ENCODE measurements at regions of chr7 and their contacts with region 1.

Region 1: GRCh38 chr7:104883718-104884452 is 130.1 kb upstream of the KMT2E start:
- DNase-seq: peak; percentile 87
- ATAC-seq: peak; percentile 89
- H3K4me3 Mint-ChIP-seq: no peak overlapping the region
- H3K27ac Mint-ChIP-seq: no peak overlapping the region
- H3K4me1 Mint-ChIP-seq: peaks cover 10% of the 10 kb centered on the region
- H3K27me3 Mint-ChIP-seq: no peaks in the 10 kb centered on the region

Region 2: DNA sequence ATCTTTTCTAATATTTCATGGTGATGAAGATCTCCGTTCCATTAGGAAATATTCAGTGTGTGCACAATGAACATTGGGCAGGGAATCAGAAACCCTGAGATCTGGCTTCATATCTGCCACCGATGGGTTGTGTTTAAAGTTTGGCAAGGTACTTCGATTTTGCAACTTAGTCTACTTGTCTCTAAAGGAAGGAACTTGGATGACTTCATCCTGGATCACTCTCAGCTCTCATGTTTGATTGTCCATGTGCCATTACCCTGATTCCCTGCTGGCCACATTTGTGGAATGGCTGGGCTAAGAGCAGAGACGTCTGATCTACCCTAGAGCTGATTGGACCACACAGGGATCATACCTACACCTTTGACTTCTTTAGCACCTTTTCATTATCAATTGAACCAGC is 46.9 kb before region 1 on chr7:
- CTCF ChIA-PET with region 1: no interaction called
- POLR2A ChIA-PET with region 1: no interaction called
- intact Hi-C with region 1: no loop called
- DNase-seq: no peak
- ATAC-seq: no peak
- H3K4me3 Mint-ChIP-seq: no peak overlapping the region
- H3K27ac Mint-ChIP-seq: no peak overlapping the region
- H3K4me1 Mint-ChIP-seq: no peaks in the 10 kb centered on the region
- H3K27me3 Mint-ChIP-seq: peaks cover 20% of the 10 kb centered on the region

Region 3: DNA sequence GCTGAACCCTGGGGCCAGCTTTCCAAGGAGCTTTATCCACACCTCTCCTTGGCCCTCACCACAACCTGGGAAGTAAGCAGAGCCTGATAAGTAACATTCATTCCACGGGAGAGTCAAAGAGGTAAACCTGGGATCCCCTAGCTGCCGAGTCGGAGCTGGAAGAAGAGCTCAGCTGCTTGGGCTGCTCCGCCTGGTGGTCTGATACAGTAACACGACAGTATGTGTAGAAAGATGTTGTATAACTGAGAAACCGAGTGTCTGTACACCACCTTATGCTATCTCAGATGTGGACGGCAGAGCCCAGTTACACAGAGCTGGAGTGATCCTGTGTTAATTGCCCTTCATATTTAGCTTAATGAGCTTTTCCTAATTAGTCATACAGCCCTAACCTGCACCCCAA is 21.2 kb before region 1 on chr7:
- CTCF ChIA-PET with region 1: interaction called, 18 read pairs
- POLR2A ChIA-PET with region 1: interaction called, 10 read pairs
- intact Hi-C with region 1: no loop called
- DNase-seq: no peak
- ATAC-seq: no peak
- H3K4me3 Mint-ChIP-seq: no peak overlapping the region
- H3K27ac Mint-ChIP-seq: no peak overlapping the region
- H3K4me1 Mint-ChIP-seq: peaks cover 10% of the 10 kb centered on the region
- H3K27me3 Mint-ChIP-seq: peaks cover 6% of the 10 kb centered on the region

Region 4: DNA sequence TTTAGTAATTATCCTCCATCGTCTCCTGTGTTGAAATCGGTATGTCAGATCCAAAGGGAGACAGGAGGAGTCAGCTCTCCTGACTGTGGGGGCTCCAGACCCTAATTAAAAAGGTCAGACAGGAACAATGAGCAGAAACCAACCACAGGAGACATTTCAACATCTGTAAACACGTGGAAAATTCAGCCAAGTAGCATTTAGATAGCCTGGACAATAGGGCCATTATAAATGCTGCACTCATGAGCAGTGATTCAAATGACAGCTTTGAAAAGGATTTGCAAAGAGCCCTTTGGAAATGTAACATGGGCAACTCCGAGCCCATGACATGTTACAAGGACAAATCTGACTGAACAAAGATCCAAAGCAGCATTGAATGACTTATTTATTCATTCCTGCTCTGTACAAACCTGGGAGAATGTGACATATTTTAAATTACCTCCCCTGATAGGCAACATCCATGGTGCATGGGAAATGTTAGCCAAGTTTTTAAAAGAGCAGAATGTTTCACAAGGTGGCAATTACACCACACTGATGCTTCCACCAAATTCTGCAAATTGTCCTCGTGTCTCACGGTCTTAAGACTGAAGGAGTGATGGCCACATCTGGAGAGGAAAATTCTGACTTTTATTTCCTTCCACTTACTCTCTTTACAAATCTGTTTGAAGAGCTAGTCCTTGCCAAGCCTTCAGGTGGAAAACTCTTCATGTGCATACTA is 16.8 kb after region 1 on chr7:
- CTCF ChIA-PET with region 1: interaction called, 16 read pairs
- POLR2A ChIA-PET with region 1: no interaction called
- intact Hi-C with region 1: no loop called
- DNase-seq: no peak
- ATAC-seq: no peak
- H3K4me3 Mint-ChIP-seq: no peak overlapping the region
- H3K27ac Mint-ChIP-seq: no peak overlapping the region
- H3K4me1 Mint-ChIP-seq: peaks cover 4% of the 10 kb centered on the region
- H3K27me3 Mint-ChIP-seq: peaks cover 3% of the 10 kb centered on the region

Region 5: DNA sequence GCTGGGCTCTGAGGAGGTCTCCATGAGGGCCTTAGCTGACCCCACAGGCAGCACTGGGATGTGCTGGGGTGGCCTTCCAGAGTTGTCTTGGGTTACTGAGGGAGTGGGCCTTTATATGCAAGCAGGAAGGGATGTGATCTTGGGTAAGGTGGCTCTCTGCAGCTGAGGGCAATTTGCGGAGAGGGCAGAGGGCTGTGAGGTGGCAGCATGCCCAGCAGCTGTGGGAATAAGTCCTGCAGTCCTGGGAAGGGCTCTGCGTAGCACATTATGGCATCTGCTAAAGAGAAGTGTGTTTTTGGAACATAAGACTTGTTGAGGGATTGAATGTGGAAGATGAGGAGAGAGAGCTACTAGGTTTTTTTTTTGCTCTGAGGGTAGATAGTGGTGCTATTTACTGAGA is 30.5 kb after region 1 on chr7:
- CTCF ChIA-PET with region 1: interaction called, 111 read pairs
- POLR2A ChIA-PET with region 1: no interaction called
- intact Hi-C with region 1: loop called (anchors 1 kb)
- DNase-seq: no peak
- ATAC-seq: no peak
- H3K4me3 Mint-ChIP-seq: peak overlapping the region; percentile 20
- H3K27ac Mint-ChIP-seq: no peak overlapping the region
- H3K4me1 Mint-ChIP-seq: no peaks in the 10 kb centered on the region
- H3K27me3 Mint-ChIP-seq: no peaks in the 10 kb centered on the region

Region 6: DNA sequence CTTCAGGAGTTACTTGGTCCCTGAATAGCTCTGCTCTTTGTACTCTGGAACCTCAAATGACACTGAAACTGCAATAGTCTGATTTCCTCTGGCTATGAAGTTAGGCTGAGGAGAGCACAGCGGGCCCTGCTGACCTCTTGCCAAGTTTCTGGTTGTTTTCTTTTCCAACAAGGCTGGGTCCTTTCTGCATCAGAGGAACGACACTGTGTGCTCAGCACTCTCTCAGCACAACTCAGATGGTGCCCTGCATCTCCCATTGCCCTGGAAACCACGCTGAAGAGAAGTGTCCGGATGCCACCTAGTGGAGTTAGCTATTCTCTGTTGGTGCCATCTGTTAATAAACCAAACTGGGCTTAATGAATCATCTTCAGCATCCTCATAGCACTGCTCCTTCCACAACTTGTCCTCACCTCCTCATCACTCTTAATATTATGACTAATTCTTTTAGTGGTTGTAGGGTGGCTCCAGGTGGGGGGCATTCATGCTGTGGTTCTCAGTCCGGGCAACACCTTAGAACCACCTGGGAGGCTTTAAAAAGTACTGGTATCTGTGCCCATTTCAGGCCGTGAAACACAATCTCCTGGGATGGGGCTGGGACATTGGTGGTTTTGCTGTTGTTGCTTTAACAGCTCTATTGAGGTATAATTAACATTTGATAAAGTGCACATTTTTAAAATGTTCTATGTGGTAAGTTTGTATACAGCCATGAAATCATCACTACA is 705.6 kb after region 1 on chr7:
- CTCF ChIA-PET with region 1: interaction called, 5 read pairs
- POLR2A ChIA-PET with region 1: no interaction called
- intact Hi-C with region 1: loop called in 1 of 2 experiments (anchors 1 kb)
- DNase-seq: peak; percentile 77
- ATAC-seq: peak; percentile 98
- H3K4me3 Mint-ChIP-seq: no peak overlapping the region
- H3K27ac Mint-ChIP-seq: no peak overlapping the region
- H3K4me1 Mint-ChIP-seq: peaks cover 8% of the 10 kb centered on the region
- H3K27me3 Mint-ChIP-seq: no peaks in the 10 kb centered on the region